PC-3 (cell line): ENCODE measurements at regions of chr1 and their contacts with region 1.

Region 1: GRCh38 chr1:240402326-240402725 is 209.6 kb downstream of the GREM2 start:
- DNase-seq: no peak
- ATAC-seq: no peak
- H3K4me3 ChIP-seq: no peak overlapping the region
- H3K27ac ChIP-seq: no peak overlapping the region
- H3K4me1 ChIP-seq: peaks cover 5% of the 10 kb centered on the region; the same call in 1 of the 2 replicates
- H3K27me3 ChIP-seq: no peaks in the 10 kb centered on the region
- CTCF ChIP-seq: no peak

Region 2: GRCh38 chr1:239893127-239893731 is 509.1 kb before region 1 on chr1:
- CTCF ChIA-PET with region 1: no interaction called
- POLR2A ChIA-PET with region 1: no interaction called
- intact Hi-C with region 1: no loop called
- DNase-seq: peak; percentile 72
- ATAC-seq: peak; percentile 74
- H3K4me3 ChIP-seq: no peak overlapping the region
- H3K27ac ChIP-seq: peak overlapping the region; percentile 61
- H3K4me1 ChIP-seq: peaks cover 25% of the 10 kb centered on the region
- H3K27me3 ChIP-seq: no peaks in the 10 kb centered on the region
- CTCF ChIP-seq: no peak; the same call in 1 of the 2 replicates

Region 3: DNA sequence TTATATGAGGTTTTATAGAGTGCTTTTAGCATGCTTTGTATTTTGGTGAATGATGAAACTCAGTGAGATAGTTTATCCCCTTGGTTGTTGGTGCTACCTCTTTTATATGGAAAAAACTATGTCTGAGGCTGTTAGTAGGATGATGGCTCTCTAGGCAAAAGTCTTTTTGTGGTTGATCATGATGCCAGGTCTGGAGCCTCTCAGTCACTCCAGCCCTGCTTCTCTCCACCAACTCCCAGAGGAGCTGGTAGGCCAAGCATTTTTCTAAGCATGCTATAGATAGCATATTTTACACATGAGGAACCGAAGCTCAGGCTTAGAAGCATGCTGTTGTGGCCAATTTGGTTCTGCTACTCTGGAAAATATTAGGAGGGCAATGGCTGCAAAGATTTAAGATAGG is 228.5 kb before region 1 on chr1:
- CTCF ChIA-PET with region 1: no interaction called
- POLR2A ChIA-PET with region 1: no interaction called
- intact Hi-C with region 1: no loop called
- DNase-seq: no peak
- ATAC-seq: no peak
- H3K4me3 ChIP-seq: no peak overlapping the region
- H3K27ac ChIP-seq: no peak overlapping the region
- H3K4me1 ChIP-seq: no peaks in the 10 kb centered on the region
- H3K27me3 ChIP-seq: no peaks in the 10 kb centered on the region
- CTCF ChIP-seq: no peak

Region 4: DNA sequence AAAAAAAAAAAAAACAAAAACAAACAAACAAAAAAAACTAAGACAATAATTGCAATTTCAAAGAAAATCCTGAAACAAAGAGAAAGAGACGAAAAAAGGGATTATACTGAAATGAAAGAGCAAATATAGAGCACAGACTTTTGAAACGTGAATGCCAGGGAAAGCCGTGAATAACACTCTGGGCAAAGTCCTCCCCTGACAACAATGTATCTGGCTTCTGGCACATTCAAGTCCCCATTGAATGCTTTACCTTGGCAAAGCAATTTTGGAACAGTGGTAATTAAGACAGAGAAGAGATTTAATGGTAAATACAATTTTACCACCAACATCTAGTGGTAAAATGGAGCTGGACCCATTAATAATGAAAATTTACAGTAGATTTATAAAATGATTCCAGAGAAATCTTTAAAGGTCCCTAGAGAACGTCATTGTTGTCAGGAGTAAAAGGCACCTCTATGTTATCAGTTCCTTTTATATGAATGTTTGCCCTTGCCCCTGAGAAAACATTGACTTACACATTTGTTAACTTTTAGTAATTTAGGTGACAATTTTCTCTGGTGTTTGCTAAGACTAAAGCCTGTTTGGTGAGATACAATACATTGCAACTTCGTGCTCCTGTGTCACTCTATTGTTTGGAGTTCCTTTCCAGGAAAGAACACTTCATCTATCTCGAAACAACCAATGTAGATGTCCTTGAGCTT is 119.9 kb after region 1 on chr1:
- CTCF ChIA-PET with region 1: no interaction called
- POLR2A ChIA-PET with region 1: interaction called, 12 read pairs
- intact Hi-C with region 1: no loop called
- DNase-seq: no peak
- ATAC-seq: no peak
- H3K4me3 ChIP-seq: no peak overlapping the region
- H3K27ac ChIP-seq: no peak overlapping the region
- H3K4me1 ChIP-seq: no peaks in the 10 kb centered on the region
- H3K27me3 ChIP-seq: peaks cover 31% of the 10 kb centered on the region
- CTCF ChIP-seq: no peak